HEK293 (cell line): ENCODE measurements at regions of chr6 and their contacts with region 1.

Region 1: DNA sequence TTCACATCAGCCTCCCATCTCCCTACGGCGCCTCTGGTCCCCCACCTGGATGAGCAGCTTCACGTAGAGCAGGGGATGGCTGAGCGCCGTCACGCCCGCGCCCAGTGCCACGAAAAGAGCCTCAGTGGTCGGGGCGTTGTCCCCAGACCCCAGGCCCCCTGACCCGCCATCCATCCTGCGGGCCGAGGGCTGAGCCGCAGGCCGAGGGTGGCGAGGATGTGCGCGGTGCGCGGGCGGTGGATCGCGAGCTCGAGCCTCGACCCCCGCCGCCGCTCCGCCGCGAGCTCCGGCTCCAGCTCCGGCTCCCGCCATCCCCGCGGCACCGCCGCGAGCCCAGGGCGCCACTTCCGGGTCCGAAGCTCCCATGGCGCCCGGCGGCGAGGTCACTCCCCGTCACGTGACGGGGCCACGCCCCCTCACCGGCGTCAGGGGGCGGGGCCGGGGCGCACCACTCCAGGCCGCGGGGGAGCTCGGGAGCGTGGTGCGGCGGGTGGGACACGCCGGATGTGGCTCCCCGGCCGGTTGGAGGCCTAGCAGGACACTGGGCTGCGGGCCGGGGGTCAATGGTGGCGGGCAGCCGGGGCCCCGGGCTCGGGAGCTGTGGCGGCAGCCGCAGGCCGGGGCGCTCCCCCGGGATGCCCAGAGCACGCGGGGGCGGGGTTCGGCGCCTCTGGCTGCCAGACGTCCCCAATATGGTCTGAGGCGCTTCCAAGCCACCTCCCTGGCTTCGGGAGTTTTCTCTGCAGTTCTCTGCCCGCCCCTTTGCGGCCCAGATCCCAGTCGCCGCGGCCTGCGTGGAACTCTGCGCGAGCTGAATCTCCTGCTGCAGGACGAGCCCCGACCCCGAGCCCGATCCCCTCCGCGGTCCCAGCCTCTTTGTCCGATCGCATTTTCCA is at the start of gene MTCH1:
- H3K4me3 ChIP-seq: peak within 1 kb of the TSS; percentile 77
- H3K27ac ChIP-seq: peak within 1 kb of the TSS; percentile 92
- H3K4me1 ChIP-seq: peaks cover 12% of the 10 kb centered on the region
- CTCF ChIP-seq: no peak

Region 2: GRCh38 chr6:36874443-36875249 is 111.4 kb before region 1 on chr6 and contains the start of gene PPIL1:
- CTCF ChIA-PET with region 1: no interaction called
- POLR2A ChIA-PET with region 1: interaction called, 17 read pairs
- H3K4me3 ChIP-seq: peak within 1 kb of the TSS; percentile 86
- H3K27ac ChIP-seq: peak within 1 kb of the TSS; percentile 99
- H3K4me1 ChIP-seq: no peaks in the 10 kb centered on the region
- CTCF ChIP-seq: peak; percentile 74

Region 3: GRCh38 chr6:36885461-36886401 is 100.3 kb before region 1 on chr6 and contains the start of gene C6orf89:
- CTCF ChIA-PET with region 1: interaction called, 6 read pairs
- POLR2A ChIA-PET with region 1: interaction called, 11 read pairs
- H3K4me3 ChIP-seq: peak within 1 kb of the TSS; percentile 81
- H3K27ac ChIP-seq: peak within 1 kb of the TSS; percentile 66
- H3K4me1 ChIP-seq: peaks cover 3% of the 10 kb centered on the region; the same call in 1 of the 2 replicates
- CTCF ChIP-seq: peak; percentile 92

Region 4: GRCh38 chr6:36938536-36938935 is 47.5 kb before region 1 on chr6:
- CTCF ChIA-PET with region 1: no interaction called
- POLR2A ChIA-PET with region 1: no interaction called
- H3K4me3 ChIP-seq: no peak overlapping the region
- H3K27ac ChIP-seq: no peak overlapping the region
- H3K4me1 ChIP-seq: no peaks in the 10 kb centered on the region
- CTCF ChIP-seq: no peak

Region 5: DNA sequence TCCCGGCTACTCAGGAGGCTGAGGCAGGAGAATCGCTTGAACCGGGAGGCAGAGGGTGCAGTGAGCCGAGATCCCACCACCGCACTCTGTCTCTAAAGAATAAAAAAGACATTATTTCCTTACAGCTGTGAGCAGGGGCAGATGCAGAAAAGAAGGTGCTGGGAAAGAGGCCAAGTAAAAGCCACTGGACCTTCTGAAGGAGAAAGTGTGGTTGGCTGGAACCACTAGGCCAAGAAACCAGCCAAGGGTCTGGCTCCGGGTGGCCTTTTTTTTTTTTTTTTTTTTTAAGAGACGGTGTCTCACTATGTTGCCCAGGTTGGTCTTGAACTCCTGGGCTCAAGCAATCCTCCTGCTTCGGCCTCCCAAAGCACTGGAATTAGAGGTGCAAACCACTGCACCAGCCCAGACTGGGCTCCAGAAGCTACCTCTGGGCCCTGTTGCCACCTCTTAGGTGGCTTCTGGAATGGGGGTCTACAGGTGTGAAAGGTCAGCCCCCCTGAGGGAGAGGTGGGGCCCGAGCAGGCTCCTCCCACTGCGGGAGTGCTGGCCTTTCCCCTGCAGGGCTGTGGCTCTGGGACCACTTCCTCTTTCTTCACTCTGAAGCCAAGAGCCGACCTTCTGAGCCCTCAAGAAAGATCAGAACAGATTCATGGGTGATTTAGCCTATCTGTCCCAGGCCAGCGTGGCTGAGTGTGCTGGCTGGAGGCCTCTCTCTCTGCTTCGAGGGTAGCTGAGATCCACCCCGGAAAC is 19.2 kb after region 1 on chr6 and contains the start of gene FGD2:
- CTCF ChIA-PET with region 1: interaction called, 5 read pairs
- POLR2A ChIA-PET with region 1: interaction called, 20 read pairs
- H3K4me3 ChIP-seq: no peak within 1 kb of the TSS
- H3K27ac ChIP-seq: no peak within 1 kb of the TSS
- H3K4me1 ChIP-seq: no peaks in the 10 kb centered on the region
- CTCF ChIP-seq: no peak